AG04450 (cell line): ENCODE measurements at regions of chr3 and their contacts with region 1.

Region 1: GRCh38 chr3:87260270-87260669 is 16.1 kb downstream of the POU1F1 start:
- DNase-seq: peak; percentile 10
- H3K4me3 ChIP-seq: no peak overlapping the region
- H3K27ac ChIP-seq: no peak overlapping the region
- H3K27me3 ChIP-seq: no peaks in the 10 kb centered on the region
- CTCF ChIP-seq: peak; percentile 79

Region 2: DNA sequence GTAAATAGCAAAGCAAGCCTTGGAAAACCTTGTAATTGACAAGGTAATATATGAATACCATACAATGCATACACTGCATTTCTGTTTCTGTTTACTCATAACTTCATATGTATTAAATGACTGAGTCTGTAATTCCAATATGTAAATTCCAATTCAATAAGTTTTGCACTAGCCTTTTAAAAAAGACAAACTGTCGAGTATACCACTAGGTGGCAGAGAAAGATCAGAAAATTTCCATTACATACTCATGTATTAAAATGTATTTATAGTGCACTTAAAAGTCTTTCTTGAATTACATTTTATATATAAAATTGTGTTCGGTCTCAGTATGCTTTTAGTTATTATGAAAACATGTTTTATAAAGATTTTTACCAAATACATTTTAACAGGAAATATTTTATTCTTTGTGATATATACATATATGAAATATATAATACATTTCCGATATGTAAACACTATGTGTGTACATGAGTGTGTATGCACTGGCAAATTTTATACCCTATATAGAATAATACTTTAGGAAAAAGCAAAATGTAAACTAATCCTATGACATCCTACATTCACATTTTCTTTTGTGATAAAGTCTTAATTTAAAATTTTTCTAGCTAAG is 486.1 kb before region 1 on chr3:
- CTCF ChIA-PET with region 1: interaction called, 15 read pairs
- POLR2A ChIA-PET with region 1: no interaction called
- DNase-seq: no peak
- H3K4me3 ChIP-seq: no peak overlapping the region
- H3K27ac ChIP-seq: no peak overlapping the region
- H3K27me3 ChIP-seq: no peaks in the 10 kb centered on the region
- CTCF ChIP-seq: peak; percentile 57

Region 3: DNA sequence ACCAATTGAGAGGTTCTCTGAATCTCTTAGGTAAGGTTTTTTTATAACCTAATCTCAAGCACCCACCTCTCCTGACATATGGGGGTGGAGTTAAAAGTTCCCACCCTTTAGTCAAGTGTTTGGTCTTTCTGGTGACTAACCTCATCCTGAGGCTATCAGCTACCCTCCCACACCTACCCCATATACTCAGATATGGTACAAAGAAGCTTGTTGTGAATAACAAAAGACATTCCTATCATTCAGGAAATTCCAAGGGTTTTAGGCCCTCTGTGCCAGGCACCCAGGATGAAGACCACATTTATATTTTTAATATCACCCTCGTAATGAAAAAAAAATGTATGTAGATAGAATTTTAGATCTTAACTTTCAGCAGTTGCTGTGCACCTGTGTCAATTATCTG is 24.2 kb before region 1 on chr3:
- CTCF ChIA-PET with region 1: interaction called, 17 read pairs
- POLR2A ChIA-PET with region 1: no interaction called
- DNase-seq: no peak
- H3K4me3 ChIP-seq: no peak overlapping the region
- H3K27ac ChIP-seq: no peak overlapping the region
- H3K27me3 ChIP-seq: no peaks in the 10 kb centered on the region
- CTCF ChIP-seq: no peak

Region 4: GRCh38 chr3:87272718-87273341 is 12.6 kb after region 1 on chr3:
- CTCF ChIA-PET with region 1: interaction called, 44 read pairs
- POLR2A ChIA-PET with region 1: no interaction called
- DNase-seq: no peak
- H3K4me3 ChIP-seq: no peak overlapping the region
- H3K27ac ChIP-seq: no peak overlapping the region
- H3K27me3 ChIP-seq: no peaks in the 10 kb centered on the region
- CTCF ChIP-seq: no peak

Region 5: GRCh38 chr3:88003115-88003755 is 743.0 kb after region 1 on chr3:
- CTCF ChIA-PET with region 1: interaction called, 15 read pairs
- POLR2A ChIA-PET with region 1: no interaction called
- DNase-seq: peak; percentile 8
- H3K4me3 ChIP-seq: no peak overlapping the region
- H3K27ac ChIP-seq: no peak overlapping the region
- H3K27me3 ChIP-seq: no peaks in the 10 kb centered on the region
- CTCF ChIP-seq: peak; percentile 78